ENCODE measurements at regions of chrX and their contacts with region 1.

Region 1: GRCh38 chrX:147916375-147916968 is 4.8 kb downstream of the FMR1 start:
- DNase-seq: no peak
- ATAC-seq: no peak
- H3K4me3 ChIP-seq: no peak overlapping the region
- H3K27ac ChIP-seq: peak overlapping the region; percentile 13
- H3K4me1 ChIP-seq: peaks cover 62% of the 10 kb centered on the region
- H3K27me3 ChIP-seq: no peaks in the 10 kb centered on the region
- CTCF ChIP-seq: no peak
- EP300 ChIP-seq: no peak
- POLR2A ChIP-seq: no peak
- RAD21 ChIP-seq: no peak

Region 2: DNA sequence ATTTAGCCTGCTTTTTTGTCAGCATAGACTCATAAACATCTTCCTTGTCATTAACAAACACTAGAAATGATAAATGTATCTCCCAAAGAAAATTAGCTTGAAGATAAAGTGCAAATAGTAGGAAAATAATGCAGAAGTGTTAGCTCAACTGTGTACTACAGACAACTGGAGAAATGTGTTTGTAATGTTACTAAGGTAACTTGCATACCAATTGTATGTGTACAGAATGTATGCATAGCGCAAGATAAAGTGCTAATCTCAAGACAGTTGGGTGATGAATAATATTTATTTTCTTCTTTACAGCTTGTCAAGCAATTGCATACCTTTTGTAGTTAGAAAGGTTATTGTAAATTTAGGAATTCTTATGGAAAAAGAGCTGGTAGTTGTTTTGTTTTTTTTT is 17.3 kb after region 1 on chrX:
- CTCF ChIA-PET with region 1: no interaction called
- POLR2A ChIA-PET with region 1: no interaction called
- in situ Hi-C with region 1: no loop called
- intact Hi-C with region 1: loop called (anchors 1 kb)
- DNase-seq: no peak
- ATAC-seq: no peak
- H3K4me3 ChIP-seq: no peak overlapping the region
- H3K27ac ChIP-seq: no peak overlapping the region
- H3K4me1 ChIP-seq: no peaks in the 10 kb centered on the region
- H3K27me3 ChIP-seq: no peaks in the 10 kb centered on the region
- CTCF ChIP-seq: no peak
- EP300 ChIP-seq: no peak
- POLR2A ChIP-seq: no peak
- RAD21 ChIP-seq: no peak

Region 3: DNA sequence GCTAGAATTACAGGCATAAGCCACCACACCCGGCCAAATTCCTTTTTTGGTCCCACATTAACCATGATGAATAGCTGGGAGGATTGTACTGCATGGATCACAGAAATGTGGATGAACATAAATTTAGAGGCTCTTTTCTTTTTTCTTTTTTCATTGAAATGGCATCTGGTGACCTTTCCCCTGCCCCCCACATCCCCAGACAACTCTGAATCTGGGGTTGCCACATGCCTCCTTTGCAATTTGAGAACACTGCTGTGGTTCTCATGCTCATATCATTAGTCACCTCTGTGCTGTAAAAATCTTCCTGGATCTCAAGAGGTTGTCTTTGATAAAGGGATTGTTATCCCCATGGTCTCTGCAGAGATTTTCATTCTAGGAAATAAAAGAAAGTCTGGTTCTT is 41.8 kb after region 1 on chrX:
- CTCF ChIA-PET with region 1: no interaction called
- POLR2A ChIA-PET with region 1: no interaction called
- in situ Hi-C with region 1: no loop called
- intact Hi-C with region 1: no loop called
- DNase-seq: no peak
- ATAC-seq: no peak
- H3K4me3 ChIP-seq: no peak overlapping the region
- H3K27ac ChIP-seq: no peak overlapping the region
- H3K4me1 ChIP-seq: no peaks in the 10 kb centered on the region
- H3K27me3 ChIP-seq: no peaks in the 10 kb centered on the region
- CTCF ChIP-seq: no peak
- EP300 ChIP-seq: no peak
- POLR2A ChIP-seq: no peak
- RAD21 ChIP-seq: no peak

Region 4: GRCh38 chrX:148049441-148049840 is 133.0 kb after region 1 on chrX:
- CTCF ChIA-PET with region 1: no interaction called
- POLR2A ChIA-PET with region 1: no interaction called
- in situ Hi-C with region 1: no loop called
- intact Hi-C with region 1: no loop called
- DNase-seq: peak; percentile 22
- ATAC-seq: no peak
- H3K4me3 ChIP-seq: no peak overlapping the region
- H3K27ac ChIP-seq: no peak overlapping the region
- H3K4me1 ChIP-seq: no peaks in the 10 kb centered on the region
- H3K27me3 ChIP-seq: no peaks in the 10 kb centered on the region; a peak in 1 of 5 replicates
- CTCF ChIP-seq: peak; percentile 39; the same call in 1 of the 2 replicates
- EP300 ChIP-seq: no peak
- POLR2A ChIP-seq: no peak
- RAD21 ChIP-seq: no peak